ENCODE measurements at regions of chr5 and their contacts with region 1.

Region 1: GRCh38 chr5:12016159-12016746 is 112.0 kb upstream of the CTNND2 start:
- DNase-seq: no peak
- ATAC-seq: no peak

Region 2: DNA sequence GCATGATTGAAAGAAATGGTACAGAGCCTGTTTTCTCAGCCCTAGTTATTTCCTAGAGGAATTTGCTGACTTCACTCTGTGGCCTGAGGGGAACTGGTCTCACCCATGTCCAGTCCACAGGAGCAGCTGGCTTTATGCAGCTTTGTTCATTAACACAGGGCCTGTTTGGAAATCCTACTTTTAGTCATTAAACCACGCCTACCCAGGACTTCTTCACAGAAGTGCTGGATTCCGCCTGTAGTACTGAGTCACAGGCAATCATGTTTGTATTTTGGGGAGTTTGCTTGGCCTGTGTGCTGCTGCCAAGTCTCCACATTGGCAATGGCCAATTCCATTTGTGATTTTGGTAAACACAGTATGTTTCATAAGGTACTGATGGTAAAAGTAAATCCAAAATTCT is 164.8 kb before region 1 on chr5:
- intact Hi-C with region 1: no loop called
- DNase-seq: no peak
- ATAC-seq: peak; percentile 15

Region 3: GRCh38 chr5:11992518-11992917 is 23.7 kb before region 1 on chr5:
- intact Hi-C with region 1: loop called (anchors 2 kb)
- DNase-seq: no peak
- ATAC-seq: no peak

Region 4: DNA sequence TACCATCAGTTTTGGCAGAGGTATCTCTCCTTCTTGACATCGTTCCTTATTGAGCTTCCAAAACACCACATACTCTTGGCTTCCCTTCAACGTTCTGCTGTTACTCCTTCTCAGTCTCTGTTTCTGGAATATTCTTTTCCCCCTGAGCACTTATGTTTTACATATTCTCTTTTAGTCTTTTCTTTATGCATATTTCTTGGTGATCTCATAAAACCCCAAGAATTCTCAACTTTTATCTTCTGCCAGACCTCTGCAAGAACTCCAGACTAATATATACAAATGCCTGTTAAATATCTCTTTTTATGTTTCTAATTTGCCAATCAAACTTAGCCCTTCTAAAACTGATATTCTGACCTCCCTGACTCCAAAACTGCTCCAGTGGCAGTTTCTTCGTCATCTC is 341.4 kb after region 1 on chr5:
- intact Hi-C with region 1: no loop called
- DNase-seq: no peak
- ATAC-seq: no peak